Endothelial cell of umbilical vein (primary cell): ENCODE measurements at regions of chr3 and their contacts with region 1.

Region 1: DNA sequence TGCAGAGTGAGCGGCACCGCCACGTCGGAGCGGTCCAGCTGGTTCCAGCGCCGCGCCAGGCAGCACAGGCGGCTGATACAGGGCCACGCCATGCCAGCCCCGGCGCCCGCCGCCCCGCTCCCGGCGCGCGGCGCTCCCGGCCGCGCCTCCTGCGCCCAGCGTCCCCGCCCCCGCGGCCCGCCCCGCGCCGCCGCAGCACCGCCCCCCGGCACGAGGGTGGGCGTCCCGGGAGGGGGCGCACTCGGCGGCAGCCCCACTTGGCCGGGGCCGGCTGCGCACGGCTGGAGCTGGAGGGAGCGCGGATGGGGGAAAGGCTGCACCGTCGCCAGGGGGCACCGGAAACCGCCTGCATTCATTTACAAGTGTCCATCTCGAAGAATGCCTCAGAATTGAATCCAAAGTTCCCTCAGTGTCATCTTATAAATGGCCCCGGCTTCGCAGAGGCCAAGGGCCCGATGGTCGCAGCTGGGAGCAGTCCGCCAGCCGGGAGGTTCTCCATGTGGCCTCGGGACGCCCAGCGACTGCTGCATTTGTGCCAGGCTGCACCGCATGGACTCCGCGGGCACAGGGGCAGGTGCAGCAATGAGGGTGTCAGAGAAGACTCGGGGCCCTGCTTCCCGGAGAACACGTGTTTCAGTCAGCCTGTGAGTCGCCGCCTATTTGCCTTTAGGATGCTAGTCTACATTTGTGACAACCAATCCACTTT is at the start of gene MAP6D1:
- DNase-seq: peak; percentile 42
- H3K4me3 ChIP-seq: peak within 1 kb of the TSS; percentile 48 to 55 (median 50)
- H3K27ac ChIP-seq: no peak within 1 kb of the TSS
- H3K4me1 ChIP-seq: peaks cover 8% of the 10 kb centered on the region
- H3K27me3 ChIP-seq: no peaks in the 10 kb centered on the region
- CTCF ChIP-seq: peak in 1 of 2 donors; percentile 26
- POLR2A ChIP-seq: no peak
- total RNA-seq, gene MAP6D1: 3.2 and 3.5 TPM in 2 replicates

Region 2: DNA sequence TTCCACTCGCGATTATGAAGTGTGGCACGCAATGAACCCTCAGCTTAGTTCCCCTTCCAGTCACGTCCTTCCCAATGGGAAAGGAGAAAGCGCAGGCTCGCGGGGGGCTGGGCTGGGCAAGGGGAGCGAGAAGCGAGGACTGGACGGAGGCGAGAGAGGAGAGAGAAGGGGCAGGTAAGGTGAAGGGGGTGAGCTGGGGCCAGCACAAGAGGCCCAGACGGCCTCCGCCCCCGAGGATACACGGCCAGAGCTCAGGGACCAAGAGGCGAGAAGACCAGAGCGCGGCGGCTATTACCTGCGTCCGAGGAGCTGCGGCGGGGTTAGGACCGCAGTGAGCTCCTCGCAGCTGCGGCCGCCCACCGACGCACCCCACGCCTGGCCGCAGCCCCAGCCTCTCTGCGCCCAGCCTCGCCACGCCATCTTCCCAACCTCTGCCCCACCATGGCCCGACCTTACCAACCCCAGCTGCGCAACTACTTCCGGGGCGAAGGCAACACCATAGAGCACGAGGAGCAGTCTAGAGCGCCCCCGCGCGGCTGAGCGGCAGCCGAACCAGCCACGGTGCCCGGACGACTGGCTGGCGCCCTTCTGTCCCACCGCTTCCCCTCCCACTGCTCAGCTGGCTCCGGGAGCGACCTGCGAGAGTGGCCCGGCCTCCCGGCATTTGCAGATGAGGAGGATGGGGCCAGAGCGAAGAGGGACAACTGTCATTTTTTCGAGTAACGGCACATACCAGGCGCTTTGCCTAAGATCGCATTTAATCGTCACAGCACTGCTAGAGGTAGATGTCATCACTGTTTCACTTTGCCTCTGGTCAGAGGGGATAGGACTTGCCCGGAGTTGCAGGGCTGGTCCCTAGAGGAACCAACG is 59.1 kb after region 1 on chr3 and contains the start of gene PARL:
- CTCF ChIA-PET with region 1: interaction called, 16 read pairs
- POLR2A ChIA-PET with region 1: no interaction called
- dilution Hi-C with region 1: no loop called
- intact Hi-C with region 1: loop called (anchors 1 kb)
- DNase-seq: peak; percentile 93
- H3K4me3 ChIP-seq: peak within 1 kb of the TSS; percentile 47 to 93 (median 85)
- H3K27ac ChIP-seq: peak within 1 kb of the TSS; percentile 34
- H3K4me1 ChIP-seq: peaks cover 11% of the 10 kb centered on the region
- H3K27me3 ChIP-seq: no peaks in the 10 kb centered on the region
- CTCF ChIP-seq: peak; percentile 99 to 100
- POLR2A ChIP-seq: peak; percentile 87
- total RNA-seq, gene PARL: 48.1 and 54.1 TPM in 2 replicates